ENCODE measurements at regions of chr11 and their contacts with region 1.

Region 1: GRCh38 chr11:65117216-65118096 is at the start of gene ZNHIT2:
- DNase-seq: peak; percentile 100
- ATAC-seq: peak; percentile 68
- H3K4me3 Mint-ChIP-seq: peak within 1 kb of the TSS; percentile 88
- H3K27ac Mint-ChIP-seq: peak within 1 kb of the TSS; percentile 95
- H3K4me1 Mint-ChIP-seq: peaks cover 57% of the 10 kb centered on the region
- H3K27me3 Mint-ChIP-seq: no peaks in the 10 kb centered on the region
- total RNA-seq, gene ZNHIT2: 7.1 to 9.7 TPM

Region 2: GRCh38 chr11:64240394-64241174 is 876.9 kb before region 1 on chr11 and contains the start of gene FKBP2:
- CTCF ChIA-PET with region 1: no interaction called
- POLR2A ChIA-PET with region 1: no interaction called
- intact Hi-C with region 1: loop called in 1 of 2 experiments (anchors 10 kb)
- DNase-seq: peak; percentile 99
- ATAC-seq: peak; percentile 68
- H3K4me3 Mint-ChIP-seq: peak within 1 kb of the TSS; percentile 86
- H3K27ac Mint-ChIP-seq: peak within 1 kb of the TSS; percentile 99
- H3K4me1 Mint-ChIP-seq: peaks cover 31% of the 10 kb centered on the region
- H3K27me3 Mint-ChIP-seq: no peaks in the 10 kb centered on the region
- total RNA-seq, gene FKBP2: 19.9 to 21.3 TPM

Region 3: GRCh38 chr11:64590763-64591221 is 526.7 kb before region 1 on chr11 and contains the start of gene SLC22A12:
- CTCF ChIA-PET with region 1: no interaction called
- POLR2A ChIA-PET with region 1: no interaction called
- intact Hi-C with region 1: no loop called
- DNase-seq: no peak
- ATAC-seq: no peak
- H3K4me3 Mint-ChIP-seq: no peak within 1 kb of the TSS
- H3K27ac Mint-ChIP-seq: no peak within 1 kb of the TSS
- H3K4me1 Mint-ChIP-seq: no peaks in the 10 kb centered on the region
- H3K27me3 Mint-ChIP-seq: peaks cover 13% of the 10 kb centered on the region
- total RNA-seq, gene SLC22A12: not detected

Region 4: DNA sequence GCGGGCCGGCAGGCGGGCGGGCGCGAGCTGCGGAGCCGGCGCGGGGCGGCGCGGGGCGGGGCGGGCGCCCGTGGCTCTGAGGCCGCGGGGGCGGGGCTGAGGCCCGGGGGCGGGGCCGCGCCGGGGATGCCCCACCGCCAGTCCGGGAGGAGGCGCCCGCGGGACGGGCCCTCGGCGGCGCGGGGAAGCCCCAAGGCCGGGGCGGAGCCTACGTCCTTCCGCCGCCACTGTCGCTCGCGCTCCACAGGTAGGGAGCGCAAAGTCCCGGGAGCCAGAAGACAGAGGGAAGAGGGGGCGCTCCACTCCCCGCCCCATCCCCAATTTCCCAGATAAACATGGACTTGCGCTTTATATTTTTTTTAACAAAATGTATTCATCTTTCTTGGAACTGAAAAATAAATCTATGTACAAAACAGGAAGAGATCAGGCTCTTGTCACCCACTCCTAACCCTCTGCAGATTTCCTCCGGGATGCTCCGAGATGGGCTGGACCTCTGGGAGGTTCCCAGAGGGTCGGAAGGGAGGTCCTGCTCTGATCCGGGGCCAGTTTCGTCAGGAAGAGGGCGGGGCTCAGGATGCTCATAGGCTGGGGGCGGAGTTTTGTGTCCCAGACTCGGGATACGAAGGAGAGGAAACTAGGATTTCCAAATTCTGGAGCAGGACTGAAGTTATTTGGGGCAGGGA is 314.2 kb before region 1 on chr11 and contains the start of gene MAP4K2:
- CTCF ChIA-PET with region 1: no interaction called
- POLR2A ChIA-PET with region 1: no interaction called
- intact Hi-C with region 1: loop called in 1 of 2 experiments (anchors 2 kb)
- DNase-seq: peak; percentile 92
- ATAC-seq: peak; percentile 93
- H3K4me3 Mint-ChIP-seq: peak within 1 kb of the TSS; percentile 75
- H3K27ac Mint-ChIP-seq: peak within 1 kb of the TSS; percentile 90
- H3K4me1 Mint-ChIP-seq: peaks cover 27% of the 10 kb centered on the region
- H3K27me3 Mint-ChIP-seq: no peaks in the 10 kb centered on the region
- total RNA-seq, gene MAP4K2: 54.0 to 57.3 TPM

Region 5: GRCh38 chr11:64846998-64847666 is 270.3 kb before region 1 on chr11:
- CTCF ChIA-PET with region 1: interaction called, 5 read pairs
- POLR2A ChIA-PET with region 1: no interaction called
- intact Hi-C with region 1: loop called (anchors 1 to 2 kb)
- DNase-seq: peak; percentile 96
- ATAC-seq: peak; percentile 75
- H3K4me3 Mint-ChIP-seq: no peak overlapping the region
- H3K27ac Mint-ChIP-seq: no peak overlapping the region
- H3K4me1 Mint-ChIP-seq: peaks cover 54% of the 10 kb centered on the region
- H3K27me3 Mint-ChIP-seq: no peaks in the 10 kb centered on the region

Region 6: DNA sequence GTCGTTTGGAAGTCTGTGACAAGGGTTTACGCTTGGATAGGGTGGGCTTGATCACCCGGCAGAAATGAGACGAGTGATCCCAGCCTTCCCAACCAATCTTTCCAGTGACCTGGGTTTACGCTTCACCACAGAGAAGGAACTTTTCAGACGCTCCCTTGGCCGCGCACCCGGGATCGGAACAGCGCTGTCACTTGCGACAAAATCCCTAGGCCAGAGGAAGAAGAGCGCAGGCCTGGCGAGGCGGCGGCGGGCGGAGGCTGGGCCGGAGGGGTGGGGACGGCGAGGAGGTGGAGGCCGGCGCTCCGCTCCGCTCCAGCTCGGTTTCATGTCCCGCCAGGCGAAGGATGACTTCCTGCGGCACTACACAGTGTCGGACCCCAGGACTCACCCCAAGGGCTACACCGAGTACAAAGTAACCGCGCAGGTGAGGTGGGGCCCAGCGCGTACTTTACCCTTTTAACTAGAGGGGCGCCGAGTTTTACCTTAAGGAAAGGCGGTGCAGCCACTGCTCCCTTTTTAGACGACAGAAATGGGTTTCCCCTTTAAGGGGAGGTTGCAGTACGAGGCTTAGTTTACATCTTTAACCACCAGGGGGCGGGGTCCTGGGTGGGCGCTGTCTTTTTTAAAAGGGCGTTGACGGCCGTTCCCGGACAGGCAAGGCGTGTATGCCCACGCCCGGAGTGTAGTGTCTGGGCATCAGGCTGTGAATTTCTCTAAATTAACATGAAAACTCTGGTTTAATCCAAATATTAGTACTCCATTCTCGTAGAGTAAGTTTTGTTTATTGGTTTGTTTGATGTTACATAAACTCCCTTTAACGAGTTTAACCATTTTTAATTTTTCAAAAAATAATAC is 90.0 kb before region 1 on chr11 and contains the start of gene SNX15:
- CTCF ChIA-PET with region 1: interaction called, 6 read pairs
- POLR2A ChIA-PET with region 1: no interaction called
- intact Hi-C with region 1: loop called in 1 of 2 experiments (anchors 1 kb)
- DNase-seq: peak; percentile 94
- ATAC-seq: peak; percentile 91
- H3K4me3 Mint-ChIP-seq: peak within 1 kb of the TSS; percentile 73
- H3K27ac Mint-ChIP-seq: peak within 1 kb of the TSS; percentile 86
- H3K4me1 Mint-ChIP-seq: peaks cover 21% of the 10 kb centered on the region
- H3K27me3 Mint-ChIP-seq: no peaks in the 10 kb centered on the region
- total RNA-seq, gene SNX15: 12.1 to 14.2 TPM

Region 7: GRCh38 chr11:65095974-65096806 is 21.3 kb before region 1 on chr11 and contains the start of gene VPS51:
- CTCF ChIA-PET with region 1: interaction called, 56 read pairs
- POLR2A ChIA-PET with region 1: interaction called, 4 read pairs
- intact Hi-C with region 1: loop called in 1 of 2 experiments (anchors 1 kb)
- DNase-seq: peak; percentile 93
- ATAC-seq: peak; percentile 98
- H3K4me3 Mint-ChIP-seq: peak within 1 kb of the TSS; percentile 92
- H3K27ac Mint-ChIP-seq: peak within 1 kb of the TSS; percentile 94
- H3K4me1 Mint-ChIP-seq: peaks cover 12% of the 10 kb centered on the region
- H3K27me3 Mint-ChIP-seq: no peaks in the 10 kb centered on the region
- total RNA-seq, gene VPS51: 94.3 to 123 TPM

Region 8: DNA sequence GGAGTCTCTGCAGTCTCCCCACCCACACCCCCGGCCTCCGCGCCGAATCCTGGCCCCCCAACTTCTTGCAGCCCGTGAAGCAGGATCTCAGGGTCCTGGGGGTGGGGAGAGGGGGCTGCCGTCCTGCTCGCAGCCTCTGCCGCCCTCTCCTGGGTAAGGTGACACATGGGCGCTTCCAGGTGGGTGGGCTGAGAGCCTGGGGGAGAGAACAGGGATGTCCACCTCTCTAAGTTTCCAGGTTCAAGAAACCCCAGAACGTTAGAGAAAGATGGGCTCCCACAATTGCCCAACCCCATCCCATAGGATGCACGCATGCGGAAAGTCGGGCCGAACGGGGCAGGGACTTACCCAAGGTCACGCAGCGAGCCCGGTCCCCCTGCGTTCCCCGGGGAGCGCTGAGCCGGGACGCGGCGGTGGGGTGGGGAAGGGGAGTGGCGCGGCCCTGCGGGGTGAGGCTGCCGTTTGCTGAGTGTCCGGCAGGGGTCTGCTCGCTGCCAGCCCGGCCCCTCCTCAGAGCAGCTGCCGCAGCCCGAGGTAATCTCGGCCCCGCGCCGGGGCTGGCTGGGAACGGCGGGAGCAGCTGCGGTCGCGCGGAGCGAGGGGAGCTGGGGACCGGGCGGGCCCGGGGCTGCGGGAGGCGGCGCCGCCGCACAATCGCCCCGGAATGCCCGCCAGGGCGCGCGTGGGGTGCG is 63.6 kb after region 1 on chr11:
- CTCF ChIA-PET with region 1: interaction called, 6 read pairs
- POLR2A ChIA-PET with region 1: interaction called, 3 read pairs
- intact Hi-C with region 1: loop called in 1 of 2 experiments (anchors 1 kb)
- DNase-seq: peak; percentile 79
- ATAC-seq: peak; percentile 74
- H3K4me3 Mint-ChIP-seq: peak overlapping the region; percentile 79
- H3K27ac Mint-ChIP-seq: peak overlapping the region; percentile 80
- H3K4me1 Mint-ChIP-seq: peaks cover 14% of the 10 kb centered on the region
- H3K27me3 Mint-ChIP-seq: no peaks in the 10 kb centered on the region

Measured in activated CD4-positive, alpha-beta T cell treated with anti-CD3 and anti-CD28 coated beads for 36 hours (primary cell).